ENCODE measurements at regions of chr21 and their contacts with region 1.

Region 1: DNA sequence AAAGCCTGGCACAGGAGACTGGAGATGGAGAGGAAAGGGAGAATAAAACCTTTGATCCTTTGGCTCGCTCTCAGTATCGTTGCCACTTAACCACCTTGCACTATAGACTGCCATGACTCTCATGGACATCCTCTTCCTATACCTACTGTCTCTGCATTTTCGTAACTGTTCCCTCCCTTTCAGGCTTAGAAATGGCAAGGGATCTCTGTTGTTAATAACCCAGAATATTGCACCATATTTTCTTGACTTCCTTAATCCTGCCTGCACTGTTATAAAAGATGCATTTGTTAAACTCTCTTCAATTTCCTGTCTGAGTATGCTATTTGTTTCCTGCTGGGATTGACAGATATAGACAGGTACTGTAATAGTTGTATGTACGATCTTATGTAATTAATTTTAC is 38.6 kb downstream of the CYYR1 start:
- DNase-seq: no peak
- ATAC-seq: no peak
- H3K4me3 ChIP-seq: no peak overlapping the region
- H3K27ac ChIP-seq: no peak overlapping the region
- H3K4me1 ChIP-seq: no peaks in the 10 kb centered on the region
- H3K27me3 ChIP-seq: no peaks in the 10 kb centered on the region
- CTCF ChIP-seq: no peak
- POLR2A ChIP-seq: no peak

Region 2: DNA sequence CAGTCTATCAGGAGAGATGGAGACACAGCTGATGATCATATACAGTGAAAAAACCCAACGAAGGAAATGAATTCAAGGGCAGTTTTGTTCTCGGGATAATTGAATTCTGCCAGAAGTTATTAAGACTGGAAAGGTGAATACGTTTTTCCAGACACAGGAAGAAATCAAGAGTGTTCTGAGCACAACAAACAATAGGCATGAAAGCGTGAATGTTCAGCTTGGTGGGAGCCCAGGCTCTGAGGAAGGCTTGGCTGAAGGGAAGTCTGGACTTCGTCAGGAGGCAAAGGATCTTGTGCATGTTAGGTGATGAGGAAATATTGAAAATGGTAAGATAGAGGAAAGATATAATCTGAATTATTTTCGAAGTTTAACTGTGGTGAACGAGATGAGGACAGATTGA is 11.8 kb before region 1 on chr21:
- in situ Hi-C with region 1: no loop called
- intact Hi-C with region 1: loop called (anchors 1 kb)
- DNase-seq: no peak
- ATAC-seq: no peak
- H3K4me3 ChIP-seq: no peak overlapping the region
- H3K27ac ChIP-seq: no peak overlapping the region
- H3K4me1 ChIP-seq: no peaks in the 10 kb centered on the region
- H3K27me3 ChIP-seq: no peaks in the 10 kb centered on the region
- CTCF ChIP-seq: no peak
- POLR2A ChIP-seq: no peak

Region 3: DNA sequence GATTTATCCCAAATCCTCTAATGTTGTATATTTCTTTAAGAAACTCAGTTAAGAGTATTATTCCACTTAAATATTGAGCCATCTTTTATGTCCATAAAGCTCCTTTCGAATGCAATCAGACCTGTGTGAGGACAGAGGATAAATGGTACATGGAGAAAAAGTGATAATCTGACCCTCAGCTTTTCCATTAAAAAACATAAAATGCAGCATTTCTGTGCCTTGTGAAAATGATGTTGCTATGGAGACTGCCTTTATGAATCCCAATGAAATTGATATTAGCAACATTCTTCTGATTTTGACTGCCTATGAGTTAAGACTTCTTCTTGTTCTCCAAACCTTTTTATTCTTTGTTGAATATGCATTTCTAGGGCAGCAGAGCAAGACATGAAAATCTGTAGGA is 82.7 kb after region 1 on chr21:
- in situ Hi-C with region 1: no loop called
- intact Hi-C with region 1: no loop called
- DNase-seq: no peak
- ATAC-seq: no peak
- H3K4me3 ChIP-seq: no peak overlapping the region
- H3K27ac ChIP-seq: no peak overlapping the region
- H3K4me1 ChIP-seq: no peaks in the 10 kb centered on the region
- H3K27me3 ChIP-seq: no peaks in the 10 kb centered on the region
- CTCF ChIP-seq: no peak
- POLR2A ChIP-seq: no peak

Measured in gastrocnemius medialis (tissue), 4 donors.